ENCODE measurements at regions of chr4 and their contacts with region 1.

Region 1: DNA sequence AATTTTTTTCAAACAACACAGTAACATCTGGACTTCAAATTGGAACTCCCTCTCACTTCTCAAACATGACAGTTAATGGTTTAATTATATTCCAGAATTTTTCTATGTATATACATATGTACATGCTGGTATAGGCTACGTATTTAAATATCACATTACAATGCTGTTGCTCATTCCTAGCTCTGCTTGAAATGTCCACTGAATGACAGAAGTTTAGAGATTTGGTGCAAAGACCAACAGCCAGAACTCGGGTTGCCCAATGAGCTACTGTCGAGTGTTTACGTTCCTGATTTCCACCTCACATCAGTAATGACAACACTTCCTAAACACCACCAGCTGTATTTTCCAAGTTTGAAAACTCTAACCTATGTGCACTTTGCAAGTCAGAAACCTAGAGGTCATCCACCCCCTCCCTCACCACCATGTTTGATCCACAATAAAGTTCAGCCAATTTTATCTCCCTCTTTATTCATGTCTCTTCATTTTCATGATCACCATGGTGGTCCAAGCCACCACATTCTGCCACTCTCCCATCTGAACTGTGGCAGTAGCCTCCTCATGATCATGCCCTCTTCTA is 49.3 kb upstream of the RPL34 start:
- DNase-seq: no peak
- H3K4me3 ChIP-seq: no peak overlapping the region
- H3K27ac ChIP-seq: no peak overlapping the region
- H3K4me1 ChIP-seq: no peaks in the 10 kb centered on the region
- H3K27me3 ChIP-seq: no peaks in the 10 kb centered on the region
- CTCF ChIP-seq: no peak

Region 2: DNA sequence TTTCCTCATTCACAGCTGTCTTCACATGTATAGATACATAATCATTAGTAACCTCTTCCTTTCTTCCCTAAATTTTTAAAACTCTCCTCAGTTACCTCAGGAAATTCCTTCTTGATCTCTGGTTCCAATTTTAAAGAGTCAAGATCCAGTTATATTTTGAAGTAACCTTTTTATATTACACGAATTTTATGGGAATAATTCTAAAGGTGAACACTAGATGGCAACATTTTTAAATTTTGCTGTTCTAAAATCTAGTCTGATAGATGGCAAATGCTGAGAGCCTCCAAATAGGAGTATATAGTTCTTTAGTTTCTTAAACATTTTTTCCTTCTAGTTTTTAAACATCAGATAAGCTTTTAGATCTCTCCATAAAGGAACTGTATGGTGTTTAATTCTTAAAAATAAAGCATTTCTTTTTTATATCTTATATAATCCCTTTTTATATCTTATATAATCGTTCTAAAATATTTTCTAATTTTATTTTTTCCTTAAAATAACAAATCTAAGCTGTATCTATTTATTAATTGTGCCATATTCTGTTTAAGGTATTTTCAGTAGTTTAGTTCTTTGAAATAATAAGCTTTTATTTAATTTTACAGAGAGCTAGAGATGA is 813.1 kb before region 1 on chr4:
- intact Hi-C with region 1: loop called (anchors 10 kb)
- DNase-seq: no peak
- H3K4me3 ChIP-seq: no peak overlapping the region
- H3K27ac ChIP-seq: no peak overlapping the region
- H3K4me1 ChIP-seq: no peaks in the 10 kb centered on the region
- H3K27me3 ChIP-seq: no peaks in the 10 kb centered on the region
- CTCF ChIP-seq: peak; percentile 13 to 66 (median 65)

Region 3: GRCh38 chr4:108018040-108018883 is 552.8 kb before region 1 on chr4:
- intact Hi-C with region 1: loop called (anchors 1 kb)
- DNase-seq: peak in 1 of 2 donors; percentile 91
- H3K4me3 ChIP-seq: no peak overlapping the region
- H3K27ac ChIP-seq: no peak overlapping the region
- H3K4me1 ChIP-seq: no peaks in the 10 kb centered on the region
- H3K27me3 ChIP-seq: no peaks in the 10 kb centered on the region
- CTCF ChIP-seq: peak; percentile 65 to 87 (median 80)

Region 4: DNA sequence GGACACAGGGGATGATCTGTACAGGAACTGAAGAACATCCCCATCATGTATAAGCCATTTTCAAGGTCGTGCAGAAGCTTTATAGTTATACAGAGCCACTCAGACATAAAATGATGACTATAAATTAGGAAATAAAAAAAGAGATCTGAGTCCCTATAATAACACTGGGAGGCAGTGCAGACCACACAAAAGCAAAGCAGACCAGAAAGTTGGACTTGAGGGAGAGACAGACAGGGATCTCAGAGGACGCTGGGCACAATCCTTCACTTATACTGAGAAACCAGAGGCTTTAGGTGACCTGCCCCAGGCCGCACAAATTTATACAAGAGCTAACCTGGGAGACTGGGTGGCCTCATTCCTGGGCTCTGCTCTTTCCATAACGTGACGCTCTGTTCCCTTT is 510.9 kb before region 1 on chr4:
- intact Hi-C with region 1: loop called (anchors 5 kb)
- DNase-seq: no peak
- H3K4me3 ChIP-seq: no peak overlapping the region
- H3K27ac ChIP-seq: no peak overlapping the region
- H3K4me1 ChIP-seq: no peaks in the 10 kb centered on the region
- H3K27me3 ChIP-seq: no peaks in the 10 kb centered on the region
- CTCF ChIP-seq: no peak